Astrocyte of the cerebellum (primary cell): ENCODE measurements at regions of chr17 and their contacts with region 1.

Region 1: GRCh38 chr17:794876-795275 is 12.7 kb downstream of the MRM3 start:
- DNase-seq: peak; percentile 52
- H3K4me3 ChIP-seq: no peak overlapping the region
- CTCF ChIP-seq: peak; percentile 58

Region 2: DNA sequence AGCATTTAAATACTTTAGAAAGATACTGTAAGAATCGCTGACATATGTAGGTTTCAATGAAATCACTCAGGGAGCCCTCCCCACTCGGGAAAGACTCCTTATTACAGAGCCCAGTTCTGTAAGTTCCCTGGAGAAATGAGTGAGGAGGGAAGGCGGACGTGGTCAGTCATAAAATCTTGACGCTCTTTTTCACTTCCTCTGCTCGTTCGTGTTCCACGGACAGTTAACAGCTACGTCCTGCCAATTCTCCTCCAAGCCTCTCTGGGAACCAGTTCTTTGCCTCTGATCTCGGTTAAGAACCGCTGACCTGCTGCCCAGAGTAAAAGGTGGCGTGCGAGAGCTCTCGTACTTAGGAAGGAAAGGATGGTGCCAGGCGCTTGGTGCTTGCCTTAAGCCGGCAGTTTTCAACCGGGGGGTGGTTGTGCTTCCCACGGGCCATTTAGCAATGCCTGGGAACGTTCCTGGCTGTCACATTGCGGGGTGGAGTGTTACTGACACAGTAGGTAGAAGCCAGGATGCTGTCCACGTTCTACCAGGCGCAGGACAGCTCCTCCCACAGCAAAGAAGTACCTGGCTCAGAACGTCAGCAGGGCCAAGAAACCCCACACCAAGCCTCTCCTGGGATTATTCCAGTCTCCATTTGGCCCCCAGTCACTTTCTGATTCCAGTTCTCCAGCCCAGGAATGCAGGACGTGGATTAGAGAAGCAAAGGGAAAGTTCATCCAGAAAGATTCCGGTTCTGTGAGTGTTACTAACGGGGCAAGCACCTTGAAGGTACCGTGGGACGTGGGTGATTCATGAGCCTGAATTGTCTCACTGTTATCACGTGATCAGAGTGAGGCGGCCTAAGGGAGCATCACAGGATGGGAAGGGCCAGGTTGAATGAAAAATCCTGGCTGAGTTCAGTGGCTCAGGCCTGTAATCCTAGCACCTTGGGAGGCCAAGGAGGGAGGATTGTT is 75.0 kb after region 1 on chr17:
- in situ Hi-C with region 1: loop called (anchors 5 kb)
- DNase-seq: no peak
- H3K4me3 ChIP-seq: no peak overlapping the region
- CTCF ChIP-seq: no peak